ENCODE measurements at regions of chr15 and their contacts with region 1.

Region 1: GRCh38 chr15:83973816-83974215 is 261.8 kb upstream of the GOLGA6L4 start:
- DNase-seq: no peak
- H3K4me3 ChIP-seq: no peak overlapping the region
- H3K27ac ChIP-seq: no peak overlapping the region
- H3K4me1 ChIP-seq: no peaks in the 10 kb centered on the region
- H3K27me3 ChIP-seq: no peaks in the 10 kb centered on the region
- CTCF ChIP-seq: peak; percentile 27 to 54

Region 2: DNA sequence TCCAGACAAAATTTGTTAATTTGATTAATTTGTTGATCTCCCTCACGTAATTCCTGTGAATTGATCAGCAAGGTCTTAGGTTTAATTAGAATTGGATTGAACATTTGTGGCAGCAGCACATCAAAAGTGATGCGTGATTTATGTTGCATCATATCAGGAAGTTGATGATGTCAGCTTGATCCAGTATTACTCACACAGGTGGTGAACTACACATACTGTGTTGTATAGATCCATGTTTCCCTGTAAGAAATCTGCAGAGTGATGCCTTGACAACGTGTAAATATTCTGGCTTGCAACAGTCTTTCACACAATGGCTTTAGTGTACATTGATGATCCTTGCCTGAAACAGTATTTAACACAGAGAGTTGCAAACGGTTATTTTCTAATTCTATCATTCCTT is 119.5 kb before region 1 on chr15:
- CTCF ChIA-PET with region 1: no interaction called
- dilution Hi-C with region 1: no loop called
- in situ Hi-C with region 1: no loop called
- intact Hi-C with region 1: loop called (anchors 2 kb)
- DNase-seq: peak; percentile 96
- H3K4me3 ChIP-seq: no peak overlapping the region
- H3K27ac ChIP-seq: peak overlapping the region; percentile 97
- H3K4me1 ChIP-seq: peaks cover 29% of the 10 kb centered on the region
- H3K27me3 ChIP-seq: no peaks in the 10 kb centered on the region
- CTCF ChIP-seq: no peak

Region 3: GRCh38 chr15:83919319-83919830 is 54.4 kb before region 1 on chr15:
- CTCF ChIA-PET with region 1: no interaction called
- dilution Hi-C with region 1: no loop called
- in situ Hi-C with region 1: no loop called
- intact Hi-C with region 1: loop called (anchors 10 kb)
- DNase-seq: peak; percentile 51
- H3K4me3 ChIP-seq: no peak overlapping the region
- H3K27ac ChIP-seq: no peak overlapping the region
- H3K4me1 ChIP-seq: peaks cover 7% of the 10 kb centered on the region
- H3K27me3 ChIP-seq: no peaks in the 10 kb centered on the region
- CTCF ChIP-seq: no peak

Region 4: GRCh38 chr15:83930392-83931205 is 43.2 kb before region 1 on chr15:
- CTCF ChIA-PET with region 1: no interaction called
- dilution Hi-C with region 1: no loop called
- in situ Hi-C with region 1: no loop called
- intact Hi-C with region 1: no loop called
- DNase-seq: peak; percentile 20
- H3K4me3 ChIP-seq: no peak overlapping the region
- H3K27ac ChIP-seq: no peak overlapping the region
- H3K4me1 ChIP-seq: peaks cover 4% of the 10 kb centered on the region
- H3K27me3 ChIP-seq: no peaks in the 10 kb centered on the region
- CTCF ChIP-seq: no peak

Region 5: DNA sequence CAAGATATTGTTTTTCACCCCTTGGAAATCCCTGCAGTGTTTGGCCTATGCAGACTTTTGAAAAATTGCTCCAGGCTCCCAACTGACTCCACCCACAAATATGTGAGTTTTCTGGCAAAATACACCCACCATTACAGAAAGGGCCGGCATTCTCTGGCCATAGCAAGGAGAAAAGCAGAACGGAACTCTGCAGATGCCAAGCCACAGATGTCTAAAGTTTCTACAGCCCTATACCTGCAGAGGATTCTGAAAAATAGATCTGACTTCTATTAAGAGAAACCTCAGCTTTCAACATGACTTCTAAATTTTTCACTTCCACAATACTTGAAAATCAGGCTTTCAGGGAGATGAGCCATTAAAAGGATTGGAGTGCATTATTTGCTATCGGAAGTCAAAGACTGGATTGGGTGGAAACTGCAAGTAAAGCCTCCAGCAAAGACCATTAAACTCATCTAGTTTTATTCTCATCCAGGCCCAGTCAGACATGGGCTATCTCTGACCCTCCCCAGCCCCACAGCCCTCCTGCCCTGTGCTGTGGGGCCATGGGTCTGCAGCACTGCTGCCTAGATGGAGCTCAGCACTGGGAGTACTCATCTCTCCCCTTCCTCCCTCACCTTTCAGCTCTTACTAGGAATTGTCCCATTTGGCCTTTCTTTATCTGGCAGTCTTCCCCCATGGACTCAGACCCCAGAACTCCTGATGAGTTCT is 18.7 kb after region 1 on chr15:
- CTCF ChIA-PET with region 1: no interaction called
- dilution Hi-C with region 1: no loop called
- in situ Hi-C with region 1: no loop called
- intact Hi-C with region 1: no loop called
- DNase-seq: no peak
- H3K4me3 ChIP-seq: no peak overlapping the region
- H3K27ac ChIP-seq: no peak overlapping the region
- H3K4me1 ChIP-seq: no peaks in the 10 kb centered on the region
- H3K27me3 ChIP-seq: no peaks in the 10 kb centered on the region
- CTCF ChIP-seq: no peak